ENCODE measurements at regions of chr14 and their contacts with region 1.

Region 1: DNA sequence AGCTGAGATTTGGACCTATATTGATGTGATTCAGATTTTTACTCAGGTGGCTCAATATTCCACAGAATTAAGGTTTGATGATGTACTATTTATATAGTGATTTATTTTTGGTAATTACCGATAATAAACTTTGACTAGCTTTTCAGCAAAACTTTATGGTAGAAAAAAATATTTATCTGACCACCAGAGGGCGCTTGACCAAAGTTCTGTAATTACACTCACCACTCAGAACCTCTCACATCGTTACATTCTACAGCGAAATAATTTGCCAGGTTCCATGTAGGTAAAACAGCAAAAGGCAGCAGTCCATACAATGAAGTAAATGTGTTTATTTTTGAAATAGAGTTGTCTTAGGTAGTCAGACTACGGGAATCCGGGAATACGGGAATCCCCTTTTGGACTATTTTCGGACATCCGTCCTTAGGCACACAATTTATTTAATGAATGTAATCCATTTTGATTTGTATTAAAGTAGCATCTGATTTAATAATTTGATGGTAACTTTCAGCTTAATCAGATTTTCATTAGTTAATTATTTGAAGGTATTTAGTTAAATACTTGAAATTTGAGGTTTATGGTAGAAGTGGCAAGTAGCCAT is 143.0 kb upstream of the DDHD1 start:
- DNase-seq: peak; percentile 61
- ATAC-seq: no peak
- H3K4me3 ChIP-seq: no peak overlapping the region
- H3K4me3 Mint-ChIP-seq: no peak overlapping the region
- H3K27ac ChIP-seq: no peak overlapping the region
- H3K27ac Mint-ChIP-seq: no peak overlapping the region
- H3K4me1 ChIP-seq: no peaks in the 10 kb centered on the region
- H3K4me1 Mint-ChIP-seq: no peaks in the 10 kb centered on the region
- H3K27me3 ChIP-seq: no peaks in the 10 kb centered on the region
- H3K27me3 Mint-ChIP-seq: no peaks in the 10 kb centered on the region
- CTCF ChIP-seq: peak; percentile 93

Region 2: DNA sequence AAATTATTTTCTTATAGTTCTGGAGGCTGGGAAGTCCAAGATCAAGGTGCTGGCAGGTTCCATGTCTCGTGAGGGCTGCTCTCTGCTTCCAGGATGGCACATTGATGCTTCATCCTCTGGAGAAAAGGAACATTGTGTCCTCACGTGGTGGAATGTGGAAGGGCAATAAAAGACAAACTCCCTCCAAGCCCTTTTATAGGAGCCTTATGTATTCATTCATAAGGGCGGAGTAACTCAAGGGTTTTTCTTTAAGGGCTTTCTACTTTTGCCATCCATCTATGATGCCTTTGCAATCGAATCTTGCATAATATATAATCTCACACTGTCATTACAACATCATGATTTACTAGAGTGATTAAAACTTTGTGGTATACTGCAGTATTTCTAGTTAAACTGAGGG is 10.3 kb before region 1 on chr14:
- CTCF ChIA-PET with region 1: interaction called, 17 read pairs
- POLR2A ChIA-PET with region 1: no interaction called
- intact Hi-C with region 1: no loop called
- DNase-seq: no peak
- ATAC-seq: no peak
- H3K4me3 ChIP-seq: no peak overlapping the region
- H3K4me3 Mint-ChIP-seq: no peak overlapping the region
- H3K27ac ChIP-seq: no peak overlapping the region
- H3K27ac Mint-ChIP-seq: no peak overlapping the region
- H3K4me1 ChIP-seq: no peaks in the 10 kb centered on the region
- H3K4me1 Mint-ChIP-seq: no peaks in the 10 kb centered on the region
- H3K27me3 ChIP-seq: no peaks in the 10 kb centered on the region
- H3K27me3 Mint-ChIP-seq: no peaks in the 10 kb centered on the region
- CTCF ChIP-seq: no peak

Region 3: GRCh38 chr14:53325176-53325806 is 29.2 kb after region 1 on chr14:
- CTCF ChIA-PET with region 1: interaction called, 17 read pairs
- POLR2A ChIA-PET with region 1: no interaction called
- intact Hi-C with region 1: no loop called
- DNase-seq: no peak
- ATAC-seq: no peak
- H3K4me3 ChIP-seq: no peak overlapping the region
- H3K4me3 Mint-ChIP-seq: no peak overlapping the region
- H3K27ac ChIP-seq: no peak overlapping the region
- H3K27ac Mint-ChIP-seq: no peak overlapping the region
- H3K4me1 ChIP-seq: no peaks in the 10 kb centered on the region
- H3K4me1 Mint-ChIP-seq: no peaks in the 10 kb centered on the region
- H3K27me3 ChIP-seq: no peaks in the 10 kb centered on the region
- H3K27me3 Mint-ChIP-seq: no peaks in the 10 kb centered on the region
- CTCF ChIP-seq: no peak

Region 4: GRCh38 chr14:54175298-54175942 is 879.3 kb after region 1 on chr14:
- CTCF ChIA-PET with region 1: interaction called, 6 read pairs
- POLR2A ChIA-PET with region 1: no interaction called
- intact Hi-C with region 1: loop called (anchors 5 kb)
- DNase-seq: peak; percentile 63
- ATAC-seq: no peak
- H3K4me3 ChIP-seq: no peak overlapping the region
- H3K4me3 Mint-ChIP-seq: no peak overlapping the region
- H3K27ac ChIP-seq: no peak overlapping the region
- H3K27ac Mint-ChIP-seq: no peak overlapping the region
- H3K4me1 ChIP-seq: no peaks in the 10 kb centered on the region
- H3K4me1 Mint-ChIP-seq: no peaks in the 10 kb centered on the region
- H3K27me3 ChIP-seq: peaks cover 0 to 5% (median 2%) of the 10 kb centered on the region in 4 experiments
- H3K27me3 Mint-ChIP-seq: peaks cover 19% of the 10 kb centered on the region
- CTCF ChIP-seq: peak; percentile 93

Region 5: DNA sequence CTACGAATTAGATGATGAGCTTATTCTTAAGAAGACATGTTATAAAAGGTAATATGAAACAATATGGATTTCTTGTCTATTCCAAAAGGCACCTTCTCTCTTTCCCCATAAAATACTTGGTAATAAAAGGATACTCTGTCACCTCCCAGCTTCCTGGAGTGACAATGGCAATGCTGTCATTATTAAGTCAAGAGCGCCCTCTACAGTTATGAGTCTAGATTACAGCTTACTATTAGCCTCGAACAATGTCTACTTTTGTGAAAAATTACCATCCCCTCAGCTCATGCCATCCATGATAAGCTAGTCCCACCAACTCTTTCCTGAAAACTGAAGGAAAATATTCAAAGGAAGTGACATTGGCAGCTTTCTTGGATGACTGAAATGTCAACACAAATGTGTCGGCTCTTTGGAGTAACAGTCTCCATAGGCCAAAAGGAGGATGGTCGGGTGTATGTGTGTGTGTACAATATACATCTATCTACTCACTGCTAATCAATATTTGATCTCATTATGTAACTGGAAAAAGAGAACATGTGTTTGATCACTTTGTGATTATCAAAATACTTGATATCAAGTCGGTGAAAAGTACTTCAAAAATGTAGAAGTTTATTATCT is 1052.0 kb after region 1 on chr14:
- CTCF ChIA-PET with region 1: interaction called, 14 read pairs
- POLR2A ChIA-PET with region 1: no interaction called
- intact Hi-C with region 1: no loop called
- DNase-seq: peak; percentile 52
- ATAC-seq: peak; percentile 43
- H3K4me3 ChIP-seq: no peak overlapping the region
- H3K4me3 Mint-ChIP-seq: no peak overlapping the region
- H3K27ac ChIP-seq: no peak overlapping the region
- H3K27ac Mint-ChIP-seq: no peak overlapping the region
- H3K4me1 ChIP-seq: no peaks in the 10 kb centered on the region
- H3K4me1 Mint-ChIP-seq: peaks cover 3% of the 10 kb centered on the region
- H3K27me3 ChIP-seq: peaks cover 0 to 9% (median 0%) of the 10 kb centered on the region in 4 experiments
- H3K27me3 Mint-ChIP-seq: peaks cover 7% of the 10 kb centered on the region
- CTCF ChIP-seq: peak; percentile 75

Measured in B cell (primary cell).